Esophagus muscularis mucosa (tissue), 4 donors: ENCODE measurements at regions of chr12 and their contacts with region 1.

Region 1: GRCh38 chr12:79935021-79935623 is at the start of gene PPP1R12A:
- DNase-seq: peak; percentile 98
- H3K4me3 ChIP-seq: peak within 1 kb of the TSS; percentile 78 to 99 (median 88)
- H3K27ac ChIP-seq: peak within 1 kb of the TSS; percentile 97 to 98 (median 98)
- H3K4me1 ChIP-seq: peaks cover 16 to 44% (median 31%) of the 10 kb centered on the region in 4 donors
- H3K27me3 ChIP-seq: no peaks in the 10 kb centered on the region
- CTCF ChIP-seq: peak; percentile 1 to 25 (median 12)
- EP300 ChIP-seq: no peak
- POLR2A ChIP-seq: peak; percentile 92
- total RNA-seq, gene PPP1R12A: 441 to 691 (median 542) TPM

Region 2: DNA sequence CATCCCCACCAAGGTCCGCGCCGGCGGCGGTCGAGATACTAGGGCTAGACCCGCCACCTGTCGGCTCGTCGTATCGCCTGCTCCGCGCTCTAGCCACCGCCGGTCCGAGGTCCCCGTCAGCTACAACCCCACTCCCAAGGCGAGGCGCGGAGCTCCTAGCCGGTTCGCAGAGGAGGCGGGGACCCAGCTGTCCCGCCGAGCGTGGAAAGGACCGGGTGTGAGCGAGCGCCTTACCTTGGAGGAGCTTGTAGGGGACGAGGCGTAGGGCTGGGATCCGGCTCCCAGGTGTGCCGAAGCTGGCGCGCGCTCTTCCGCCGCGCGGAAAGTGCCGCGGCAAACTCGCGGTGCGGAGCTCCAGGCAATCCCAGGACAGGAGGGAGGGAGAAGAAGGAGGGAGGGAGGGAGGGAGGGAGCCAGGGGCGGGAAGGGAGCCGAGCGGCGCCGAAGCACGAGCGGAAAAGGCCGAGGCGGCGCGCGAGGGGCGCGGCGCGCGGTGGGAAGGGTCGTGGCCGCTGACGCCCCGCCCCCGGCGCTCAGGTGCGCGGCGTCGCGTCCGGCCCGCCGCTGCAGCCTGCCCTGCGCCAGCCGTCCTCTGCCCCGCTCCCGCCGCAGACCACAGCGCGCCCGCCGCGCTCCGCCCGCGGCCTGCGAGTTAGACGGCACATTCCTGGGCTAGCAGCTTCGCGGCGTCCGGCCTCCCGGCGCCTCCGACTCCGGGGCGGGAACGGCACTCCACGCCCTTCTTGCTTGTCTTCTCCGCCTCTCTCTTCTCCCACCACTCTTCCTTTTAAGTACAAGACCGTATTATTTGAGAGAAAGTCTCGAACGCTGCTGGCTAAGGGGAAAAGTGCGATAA is 244.3 kb before region 1 on chr12 and contains the start of gene PAWR:
- intact Hi-C with region 1: loop called (anchors 5 kb)
- DNase-seq: no peak
- H3K4me3 ChIP-seq: peak within 1 kb of the TSS; percentile 77 to 97 (median 85)
- H3K27ac ChIP-seq: peak within 1 kb of the TSS; percentile 85 to 94 (median 93)
- H3K4me1 ChIP-seq: peaks cover 0 to 42% (median 32%) of the 10 kb centered on the region in 4 donors
- H3K27me3 ChIP-seq: no peaks in the 10 kb centered on the region
- CTCF ChIP-seq: peak; percentile 24 to 32 (median 29)
- EP300 ChIP-seq: no peak
- POLR2A ChIP-seq: no peak
- total RNA-seq, gene PAWR: 63.1 to 127 (median 97.9) TPM

Region 3: GRCh38 chr12:79776111-79776510 is 159.0 kb before region 1 on chr12:
- intact Hi-C with region 1: loop called (anchors 10 kb)
- DNase-seq: no peak
- H3K4me3 ChIP-seq: no peak overlapping the region
- H3K27ac ChIP-seq: peak overlapping the region; percentile 24 to 52 (median 48)
- H3K4me1 ChIP-seq: peaks cover 0 to 39% (median 26%) of the 10 kb centered on the region in 4 donors
- H3K27me3 ChIP-seq: no peaks in the 10 kb centered on the region
- CTCF ChIP-seq: no peak
- EP300 ChIP-seq: no peak
- POLR2A ChIP-seq: no peak

Region 4: DNA sequence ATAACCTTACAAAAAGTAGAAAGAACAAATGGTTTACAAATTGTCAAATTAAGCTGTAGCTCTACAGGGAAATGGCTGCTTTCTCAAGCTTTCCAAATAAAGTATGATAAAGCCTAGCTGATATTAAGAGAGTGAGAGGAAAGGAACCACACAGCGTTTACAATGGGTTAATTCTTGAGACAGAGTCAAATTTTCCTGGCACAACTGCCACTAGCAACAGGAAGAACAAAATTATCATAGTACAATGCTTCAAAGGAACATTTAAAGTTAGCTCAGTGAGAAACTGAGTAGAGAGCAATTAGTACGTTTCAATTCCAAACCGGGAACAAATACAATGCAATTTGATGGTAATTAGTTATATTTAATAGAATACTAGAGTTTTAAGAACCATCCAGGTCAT is 116.3 kb before region 1 on chr12:
- intact Hi-C with region 1: loop called (anchors 10 kb)
- DNase-seq: no peak
- H3K4me3 ChIP-seq: peak overlapping the region in 1 of 4 donors; percentile 1
- H3K27ac ChIP-seq: peak overlapping the region; percentile 25 to 54 (median 51)
- H3K4me1 ChIP-seq: peaks cover 7 to 68% (median 66%) of the 10 kb centered on the region in 4 donors
- H3K27me3 ChIP-seq: no peaks in the 10 kb centered on the region
- CTCF ChIP-seq: no peak
- EP300 ChIP-seq: no peak
- POLR2A ChIP-seq: no peak

Region 5: GRCh38 chr12:80038062-80038560 is 103.0 kb after region 1 on chr12:
- intact Hi-C with region 1: loop called (anchors 5 kb)
- DNase-seq: no peak
- H3K4me3 ChIP-seq: peak overlapping the region; percentile 17 to 28 (median 18)
- H3K27ac ChIP-seq: peak overlapping the region; percentile 76 to 80 (median 79)
- H3K4me1 ChIP-seq: peaks cover 0 to 86% (median 71%) of the 10 kb centered on the region in 4 donors
- H3K27me3 ChIP-seq: no peaks in the 10 kb centered on the region
- CTCF ChIP-seq: no peak
- EP300 ChIP-seq: no peak
- POLR2A ChIP-seq: no peak

Region 6: GRCh38 chr12:80277732-80278131 is 342.6 kb after region 1 on chr12:
- intact Hi-C with region 1: no loop called
- DNase-seq: no peak
- H3K4me3 ChIP-seq: no peak overlapping the region
- H3K27ac ChIP-seq: no peak overlapping the region
- H3K4me1 ChIP-seq: peaks cover 0 to 5% (median 0%) of the 10 kb centered on the region in 4 donors
- H3K27me3 ChIP-seq: no peaks in the 10 kb centered on the region
- CTCF ChIP-seq: no peak
- EP300 ChIP-seq: no peak
- POLR2A ChIP-seq: no peak